ENCODE measurements at regions of chr10 and their contacts with region 1.

Region 1: GRCh38 chr10:118259288-118259906 is 82.7 kb downstream of the FAM204A start:
- H3K4me3 ChIP-seq: no peak overlapping the region
- H3K27ac ChIP-seq: no peak overlapping the region
- H3K4me1 ChIP-seq: no peaks in the 10 kb centered on the region; the same call in 1 of the 2 replicates
- CTCF ChIP-seq: peak; percentile 46; the same call in 1 of the 2 replicates

Region 2: GRCh38 chr10:118241229-118242137 is 17.9 kb before region 1 on chr10:
- CTCF ChIA-PET with region 1: interaction called, 17 read pairs
- POLR2A ChIA-PET with region 1: no interaction called
- H3K4me3 ChIP-seq: peak overlapping the region; percentile 22
- H3K27ac ChIP-seq: no peak overlapping the region
- H3K4me1 ChIP-seq: no peaks in the 10 kb centered on the region
- CTCF ChIP-seq: peak; percentile 85

Region 3: DNA sequence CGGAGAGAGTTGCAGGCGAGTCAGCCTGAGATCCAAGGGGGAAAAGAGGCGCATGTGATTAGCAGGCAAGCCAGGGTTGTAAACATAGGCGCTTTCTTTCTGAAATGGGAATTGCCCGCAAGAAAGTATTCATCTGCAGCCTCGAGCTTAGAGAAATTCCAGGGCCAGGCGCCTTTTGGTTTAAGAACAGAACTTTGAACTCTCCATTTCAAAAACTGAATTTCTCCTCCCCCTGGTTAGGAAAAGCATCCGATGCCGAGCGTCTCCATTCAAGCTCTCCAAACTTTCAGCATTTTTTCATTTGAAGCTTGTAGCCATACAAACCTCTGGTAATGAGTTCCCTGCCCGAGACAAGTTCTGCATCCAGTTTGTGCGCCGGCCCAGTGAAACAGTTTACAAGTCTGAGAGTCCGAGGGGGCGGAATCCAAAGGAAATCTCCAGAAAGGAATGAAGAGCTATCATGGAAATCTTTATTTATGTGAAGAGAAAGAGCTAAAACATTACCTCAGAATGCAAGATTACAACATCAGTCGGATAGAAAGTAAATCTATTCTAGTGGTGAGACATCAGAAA is 12.8 kb after region 1 on chr10:
- CTCF ChIA-PET with region 1: interaction called, 18 read pairs
- POLR2A ChIA-PET with region 1: no interaction called
- H3K4me3 ChIP-seq: no peak overlapping the region
- H3K27ac ChIP-seq: no peak overlapping the region
- H3K4me1 ChIP-seq: no peaks in the 10 kb centered on the region
- CTCF ChIP-seq: no peak

Region 4: GRCh38 chr10:118286051-118286838 is 26.8 kb after region 1 on chr10:
- CTCF ChIA-PET with region 1: interaction called, 12 read pairs
- POLR2A ChIA-PET with region 1: no interaction called
- H3K4me3 ChIP-seq: no peak overlapping the region
- H3K27ac ChIP-seq: no peak overlapping the region
- H3K4me1 ChIP-seq: no peaks in the 10 kb centered on the region
- CTCF ChIP-seq: no peak

Measured in HEK293 (cell line).